ENCODE measurements at regions of chr13 and their contacts with region 1.

Region 1: DNA sequence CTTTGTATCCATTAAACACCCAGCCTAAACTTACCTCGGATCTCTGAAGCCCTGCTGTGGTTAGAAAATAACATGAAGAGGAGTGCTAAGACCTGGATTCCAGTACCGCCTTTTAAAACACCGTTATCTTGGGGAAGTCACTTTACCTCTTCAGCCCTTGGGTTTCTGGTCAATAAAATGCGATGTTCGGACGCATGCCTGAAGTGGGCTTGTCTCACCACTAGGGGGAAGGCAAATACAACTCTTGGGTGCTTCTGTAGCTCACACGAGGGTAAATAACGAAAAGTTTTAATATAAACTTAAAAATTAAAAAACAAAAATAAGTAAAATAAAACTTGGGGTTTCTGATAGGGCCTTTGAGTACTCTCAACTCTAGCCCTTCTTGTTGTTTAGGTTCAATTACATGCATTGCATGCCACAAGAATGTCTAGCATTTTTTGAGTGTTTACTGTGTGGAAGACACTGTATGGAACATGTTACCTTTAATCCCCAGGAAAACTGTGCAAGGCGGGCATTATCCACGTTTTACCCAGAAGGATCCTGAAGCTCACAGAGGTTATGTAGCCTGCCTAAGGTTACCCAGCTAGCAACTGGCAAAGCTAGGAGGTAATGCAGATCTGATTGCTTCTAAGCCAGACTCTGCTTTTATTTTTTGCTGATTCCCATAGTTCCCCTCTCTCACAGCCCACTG is 240.4 kb downstream of the LMO7 start:
- DNase-seq: peak; percentile 42
- CTCF ChIP-seq: peak; percentile 88

Region 2: DNA sequence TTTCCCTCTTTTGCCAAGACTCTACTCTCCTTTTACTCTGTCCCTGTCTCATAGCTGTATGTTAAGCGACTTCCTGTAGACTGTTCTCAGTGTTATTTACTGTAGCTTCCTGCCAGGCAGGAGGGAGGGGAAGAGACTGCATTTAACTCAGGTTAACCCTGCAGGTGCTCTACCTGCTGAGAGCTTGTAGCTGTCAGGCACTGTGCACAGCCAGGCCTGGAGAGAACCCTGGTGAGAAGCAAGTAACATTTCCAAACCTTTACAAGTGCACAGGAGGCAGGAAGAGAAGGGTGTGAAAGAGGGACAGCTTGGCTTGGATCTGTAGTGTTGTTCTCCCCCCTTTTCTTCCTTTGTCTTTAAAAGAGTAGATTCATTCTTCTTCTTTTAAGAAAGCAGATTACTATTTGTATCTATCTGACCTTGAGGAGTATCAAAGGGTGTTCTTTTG is 73.3 kb before region 1 on chr13:
- CTCF ChIA-PET with region 1: no interaction called
- POLR2A ChIA-PET with region 1: no interaction called
- DNase-seq: peak; percentile 13
- CTCF ChIP-seq: no peak

Region 3: GRCh38 chr13:75826391-75826790 is 50.1 kb before region 1 on chr13:
- CTCF ChIA-PET with region 1: no interaction called
- POLR2A ChIA-PET with region 1: no interaction called
- DNase-seq: no peak
- CTCF ChIP-seq: no peak

Region 4: GRCh38 chr13:75864718-75865117 is 11.8 kb before region 1 on chr13:
- CTCF ChIA-PET with region 1: interaction called, 20 read pairs
- POLR2A ChIA-PET with region 1: no interaction called
- DNase-seq: no peak
- CTCF ChIP-seq: no peak

Region 5: GRCh38 chr13:75902166-75903104 is 25.9 kb after region 1 on chr13:
- CTCF ChIA-PET with region 1: interaction called, 22 read pairs
- POLR2A ChIA-PET with region 1: no interaction called
- DNase-seq: no peak
- CTCF ChIP-seq: no peak

Region 6: GRCh38 chr13:76473552-76474134 is 597.1 kb after region 1 on chr13:
- CTCF ChIA-PET with region 1: interaction called, 57 read pairs
- POLR2A ChIA-PET with region 1: no interaction called
- DNase-seq: peak; percentile 35
- CTCF ChIP-seq: peak; percentile 67

Region 7: GRCh38 chr13:76980075-76980718 is 1103.7 kb after region 1 on chr13:
- CTCF ChIA-PET with region 1: interaction called, 12 read pairs
- POLR2A ChIA-PET with region 1: no interaction called
- DNase-seq: peak; percentile 93
- CTCF ChIP-seq: peak; percentile 99

Measured in GM10248 (cell line).